ENCODE measurements at regions of chr2 and their contacts with region 1.

Region 1: GRCh38 chr2:38315707-38316333 is 61.3 kb downstream of the ATL2 start:
- DNase-seq: peak in 3 of 9 experiments; percentile 18 to 59 (median 52)
- ATAC-seq: peak; percentile 48
- H3K4me3 ChIP-seq: no peak overlapping the region
- H3K4me3 Mint-ChIP-seq: no peak overlapping the region
- H3K27ac ChIP-seq: no peak overlapping the region
- H3K27ac Mint-ChIP-seq: no peak overlapping the region
- H3K4me1 ChIP-seq: no peaks in the 10 kb centered on the region
- H3K4me1 Mint-ChIP-seq: peaks cover 2% of the 10 kb centered on the region
- H3K27me3 ChIP-seq: no peaks in the 10 kb centered on the region
- H3K27me3 Mint-ChIP-seq: no peaks in the 10 kb centered on the region
- CTCF ChIP-seq: peak; percentile 74

Region 2: GRCh38 chr2:38377050-38377828 is 61.4 kb after region 1 on chr2 and contains the start of gene ATL2:
- CTCF ChIA-PET with region 1: interaction called, 6 read pairs
- POLR2A ChIA-PET with region 1: interaction called, 3 read pairs
- intact Hi-C with region 1: loop called in 1 of 2 experiments (anchors 2 kb)
- DNase-seq: peak; percentile 87 to 96 (median 93)
- ATAC-seq: peak; percentile 80
- H3K4me3 ChIP-seq: peak within 1 kb of the TSS; percentile 71 to 93
- H3K4me3 Mint-ChIP-seq: peak within 1 kb of the TSS; percentile 97
- H3K27ac ChIP-seq: peak within 1 kb of the TSS; percentile 84 to 91
- H3K27ac Mint-ChIP-seq: peak within 1 kb of the TSS; percentile 96
- H3K4me1 ChIP-seq: peaks cover 35% of the 10 kb centered on the region
- H3K4me1 Mint-ChIP-seq: peaks cover 69% of the 10 kb centered on the region
- H3K27me3 ChIP-seq: no peaks in the 10 kb centered on the region
- H3K27me3 Mint-ChIP-seq: no peaks in the 10 kb centered on the region
- CTCF ChIP-seq: no peak
- total RNA-seq, gene ATL2: 76.4 to 88.2 TPM

Region 3: DNA sequence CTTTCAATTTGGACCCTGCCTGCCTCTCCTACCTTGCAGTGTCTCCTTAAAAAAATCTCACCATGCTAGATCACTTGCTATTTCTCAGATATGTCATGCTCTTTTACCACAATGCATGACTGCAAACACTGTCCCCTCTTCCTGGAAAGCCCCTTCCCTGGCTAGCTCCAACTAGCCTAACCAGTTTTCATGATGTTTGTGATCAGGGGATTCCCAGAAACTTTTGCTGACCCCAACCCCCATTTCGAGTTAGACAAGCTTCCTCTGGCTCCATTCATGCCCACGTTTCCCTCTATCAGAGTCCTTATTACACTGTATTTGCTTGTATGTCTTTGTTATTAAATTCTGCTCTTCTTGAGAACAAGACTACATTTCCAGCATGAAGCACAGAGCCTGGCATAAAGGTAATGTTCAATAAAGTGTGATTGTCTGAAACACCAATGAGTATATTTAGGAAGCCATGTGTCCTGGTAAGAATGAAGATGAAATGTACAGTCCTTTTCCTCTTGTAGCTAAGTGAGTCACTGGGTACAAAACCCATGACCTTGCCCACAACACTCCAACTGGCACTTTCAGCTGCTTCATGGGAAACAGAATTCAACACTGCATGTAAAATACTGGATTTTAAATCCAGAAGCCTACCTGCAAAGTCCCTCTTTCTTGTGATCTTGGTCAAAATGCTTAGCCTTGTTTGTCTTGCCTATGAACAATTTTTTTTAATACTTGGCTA is 123.2 kb after region 1 on chr2:
- CTCF ChIA-PET with region 1: interaction called, 5 read pairs
- POLR2A ChIA-PET with region 1: no interaction called
- intact Hi-C with region 1: loop called in 1 of 2 experiments (anchors 10 kb)
- DNase-seq: no peak
- ATAC-seq: no peak
- H3K4me3 ChIP-seq: no peak overlapping the region
- H3K4me3 Mint-ChIP-seq: no peak overlapping the region
- H3K27ac ChIP-seq: no peak overlapping the region
- H3K27ac Mint-ChIP-seq: no peak overlapping the region
- H3K4me1 ChIP-seq: no peaks in the 10 kb centered on the region
- H3K4me1 Mint-ChIP-seq: no peaks in the 10 kb centered on the region
- H3K27me3 ChIP-seq: no peaks in the 10 kb centered on the region
- H3K27me3 Mint-ChIP-seq: peaks cover 10% of the 10 kb centered on the region
- CTCF ChIP-seq: no peak

Region 4: GRCh38 chr2:38465789-38466127 is 149.9 kb after region 1 on chr2:
- CTCF ChIA-PET with region 1: interaction called, 48 read pairs
- POLR2A ChIA-PET with region 1: no interaction called
- intact Hi-C with region 1: loop called (anchors 1 to 2 kb)
- DNase-seq: peak in 3 of 9 experiments; percentile 14 to 48 (median 30)
- ATAC-seq: peak; percentile 51
- H3K4me3 ChIP-seq: no peak overlapping the region
- H3K4me3 Mint-ChIP-seq: no peak overlapping the region
- H3K27ac ChIP-seq: no peak overlapping the region
- H3K27ac Mint-ChIP-seq: no peak overlapping the region
- H3K4me1 ChIP-seq: no peaks in the 10 kb centered on the region
- H3K4me1 Mint-ChIP-seq: no peaks in the 10 kb centered on the region
- H3K27me3 ChIP-seq: no peaks in the 10 kb centered on the region
- H3K27me3 Mint-ChIP-seq: no peaks in the 10 kb centered on the region
- CTCF ChIP-seq: no peak

Region 5: DNA sequence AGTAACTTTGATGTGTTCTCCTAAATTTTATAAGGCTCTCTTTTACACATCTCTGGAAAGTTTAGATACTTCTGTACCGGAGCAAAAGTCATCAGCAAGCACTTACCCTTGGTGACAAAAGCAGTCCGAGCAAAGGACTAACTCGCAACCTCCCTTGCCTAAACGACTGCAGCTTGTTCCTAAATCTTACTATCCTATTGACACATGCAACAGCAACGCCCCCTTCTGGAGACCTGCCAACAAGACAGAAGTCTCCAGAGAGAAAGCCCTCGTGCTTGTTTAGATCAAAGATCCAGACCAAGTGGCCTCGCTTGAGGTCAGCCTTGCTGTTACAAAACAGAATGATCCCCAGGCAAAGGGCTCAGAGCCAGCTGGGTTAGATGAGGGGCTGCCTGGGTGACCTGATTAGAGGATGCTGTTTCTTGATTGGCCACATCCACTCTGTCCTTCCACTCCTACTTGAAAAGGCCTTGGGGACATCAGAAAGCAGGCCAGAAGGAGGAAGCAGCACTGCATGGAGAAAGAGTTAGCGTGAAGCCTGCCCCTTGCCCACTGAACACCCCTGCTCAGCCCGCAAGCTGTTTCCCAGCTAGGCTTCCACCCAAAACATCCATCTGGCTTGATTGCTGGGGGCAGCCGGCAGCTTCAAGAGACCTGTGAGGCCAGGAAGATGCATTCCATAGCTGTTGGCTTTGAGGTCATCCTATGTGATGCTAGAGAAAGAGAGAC is 192.7 kb after region 1 on chr2:
- CTCF ChIA-PET with region 1: interaction called, 157 read pairs
- POLR2A ChIA-PET with region 1: no interaction called
- intact Hi-C with region 1: loop called (anchors 1 kb)
- DNase-seq: peak; percentile 61 to 83 (median 78)
- ATAC-seq: peak; percentile 80
- H3K4me3 ChIP-seq: no peak overlapping the region
- H3K4me3 Mint-ChIP-seq: no peak overlapping the region
- H3K27ac ChIP-seq: no peak overlapping the region
- H3K27ac Mint-ChIP-seq: no peak overlapping the region
- H3K4me1 ChIP-seq: no peaks in the 10 kb centered on the region
- H3K4me1 Mint-ChIP-seq: peaks cover 2% of the 10 kb centered on the region
- H3K27me3 ChIP-seq: no peaks in the 10 kb centered on the region
- H3K27me3 Mint-ChIP-seq: peaks cover 5% of the 10 kb centered on the region
- CTCF ChIP-seq: peak; percentile 75

Region 6: DNA sequence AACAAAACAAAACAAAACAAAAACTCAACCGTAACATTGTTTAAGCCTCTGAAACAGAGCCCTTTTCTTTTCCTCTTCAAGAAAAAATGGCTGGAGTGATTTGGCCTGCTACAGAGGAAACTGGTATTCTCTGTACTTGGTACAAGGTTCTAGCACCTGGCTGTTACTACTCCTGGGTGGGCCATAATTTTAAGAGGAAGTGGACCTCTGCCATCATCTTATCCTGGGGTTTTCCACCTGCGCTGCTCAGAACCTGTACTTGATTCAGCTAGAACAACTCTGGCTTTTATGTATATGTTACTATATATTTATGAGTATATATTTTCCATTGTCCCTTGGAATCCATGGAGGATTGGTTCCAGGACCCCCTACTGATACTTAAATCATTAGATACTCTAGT is 412.9 kb after region 1 on chr2:
- CTCF ChIA-PET with region 1: no interaction called
- POLR2A ChIA-PET with region 1: no interaction called
- intact Hi-C with region 1: loop called in 1 of 2 experiments (anchors 5 kb)
- DNase-seq: no peak
- ATAC-seq: no peak
- H3K4me3 ChIP-seq: no peak overlapping the region
- H3K4me3 Mint-ChIP-seq: no peak overlapping the region
- H3K27ac ChIP-seq: no peak overlapping the region
- H3K27ac Mint-ChIP-seq: no peak overlapping the region
- H3K4me1 ChIP-seq: no peaks in the 10 kb centered on the region
- H3K4me1 Mint-ChIP-seq: peaks cover 4% of the 10 kb centered on the region
- H3K27me3 ChIP-seq: no peaks in the 10 kb centered on the region
- H3K27me3 Mint-ChIP-seq: no peaks in the 10 kb centered on the region
- CTCF ChIP-seq: no peak

Region 7: GRCh38 chr2:38740851-38741731 is 425.3 kb after region 1 on chr2:
- CTCF ChIA-PET with region 1: interaction called, 4 read pairs
- POLR2A ChIA-PET with region 1: no interaction called
- intact Hi-C with region 1: loop called (anchors 5 to 10 kb)
- DNase-seq: peak in 3 of 9 experiments; percentile 48 to 73 (median 62)
- ATAC-seq: peak; percentile 22
- H3K4me3 ChIP-seq: no peak overlapping the region
- H3K4me3 Mint-ChIP-seq: no peak overlapping the region
- H3K27ac ChIP-seq: peak overlapping the region in 1 of 2 experiments; percentile 21
- H3K27ac Mint-ChIP-seq: peak overlapping the region; percentile 69
- H3K4me1 ChIP-seq: peaks cover 19% of the 10 kb centered on the region
- H3K4me1 Mint-ChIP-seq: peaks cover 43% of the 10 kb centered on the region
- H3K27me3 ChIP-seq: no peaks in the 10 kb centered on the region
- H3K27me3 Mint-ChIP-seq: no peaks in the 10 kb centered on the region
- CTCF ChIP-seq: peak; percentile 72